MCF 10A (cell line): ENCODE measurements at regions of chr2 and their contacts with region 1.

Region 1: DNA sequence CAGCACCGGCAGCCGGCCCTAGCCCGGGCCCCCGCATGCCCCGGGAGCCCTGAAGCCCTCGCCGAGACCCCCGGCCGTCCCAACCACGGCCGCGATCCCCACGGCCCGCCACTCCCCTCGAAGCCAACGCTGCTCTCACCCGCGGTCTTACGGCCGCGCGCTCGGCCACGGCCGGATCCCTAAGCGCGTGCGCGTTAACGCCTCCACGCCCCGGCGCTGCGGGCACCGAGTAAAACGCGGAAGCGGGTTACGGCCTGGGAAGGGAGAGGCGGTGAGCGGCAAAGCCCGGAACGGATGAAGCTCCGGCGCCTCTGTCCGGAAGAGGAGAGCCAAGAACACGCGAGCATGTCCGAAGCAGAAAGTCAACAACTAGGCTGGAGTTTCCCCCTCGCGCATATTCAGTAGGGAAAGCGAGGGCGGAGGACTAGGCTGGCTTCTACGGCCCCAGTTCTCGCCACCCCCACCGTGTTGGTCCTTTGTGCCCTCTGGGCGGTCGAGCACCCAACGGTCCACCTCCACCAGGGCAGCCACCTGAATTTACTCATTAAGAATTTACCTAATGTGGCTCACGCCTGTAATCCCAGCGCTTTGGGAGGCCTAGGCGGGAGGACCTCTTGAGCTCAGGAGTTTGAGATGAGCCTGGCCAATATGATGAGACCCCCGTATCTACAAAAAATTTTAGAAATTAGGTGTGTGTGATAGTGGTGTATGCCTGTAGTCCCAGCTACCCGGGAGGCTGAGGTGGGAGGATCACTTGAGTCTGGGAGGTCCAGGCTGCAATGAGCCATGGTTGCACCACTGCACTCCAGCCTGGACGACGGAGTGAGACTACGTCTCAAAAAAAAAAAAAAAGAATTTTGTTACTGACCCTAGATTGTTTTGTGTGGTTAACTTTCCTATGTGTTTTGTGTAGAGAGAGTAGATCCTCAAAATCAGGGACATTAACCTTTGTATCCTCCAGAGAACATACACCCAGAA is at the start of gene KANSL3:
- DNase-seq: peak; percentile 92
- H3K4me3 Mint-ChIP-seq: peak within 1 kb of the TSS; percentile 83
- H3K27ac Mint-ChIP-seq: peak within 1 kb of the TSS; percentile 88
- H3K4me1 Mint-ChIP-seq: peaks cover 20% of the 10 kb centered on the region
- H3K27me3 Mint-ChIP-seq: no peaks in the 10 kb centered on the region
- CTCF ChIP-seq: no peak
- total RNA-seq, gene KANSL3: 36.0 and 41.4 TPM in 2 replicates

Region 2: GRCh38 chr2:96374211-96374951 is 264.1 kb before region 1 on chr2:
- CTCF ChIA-PET with region 1: no interaction called
- POLR2A ChIA-PET with region 1: no interaction called
- intact Hi-C with region 1: no loop called
- DNase-seq: peak; percentile 49
- H3K4me3 Mint-ChIP-seq: no peak overlapping the region
- H3K27ac Mint-ChIP-seq: no peak overlapping the region
- H3K4me1 Mint-ChIP-seq: no peaks in the 10 kb centered on the region
- H3K27me3 Mint-ChIP-seq: no peaks in the 10 kb centered on the region
- CTCF ChIP-seq: no peak

Region 3: DNA sequence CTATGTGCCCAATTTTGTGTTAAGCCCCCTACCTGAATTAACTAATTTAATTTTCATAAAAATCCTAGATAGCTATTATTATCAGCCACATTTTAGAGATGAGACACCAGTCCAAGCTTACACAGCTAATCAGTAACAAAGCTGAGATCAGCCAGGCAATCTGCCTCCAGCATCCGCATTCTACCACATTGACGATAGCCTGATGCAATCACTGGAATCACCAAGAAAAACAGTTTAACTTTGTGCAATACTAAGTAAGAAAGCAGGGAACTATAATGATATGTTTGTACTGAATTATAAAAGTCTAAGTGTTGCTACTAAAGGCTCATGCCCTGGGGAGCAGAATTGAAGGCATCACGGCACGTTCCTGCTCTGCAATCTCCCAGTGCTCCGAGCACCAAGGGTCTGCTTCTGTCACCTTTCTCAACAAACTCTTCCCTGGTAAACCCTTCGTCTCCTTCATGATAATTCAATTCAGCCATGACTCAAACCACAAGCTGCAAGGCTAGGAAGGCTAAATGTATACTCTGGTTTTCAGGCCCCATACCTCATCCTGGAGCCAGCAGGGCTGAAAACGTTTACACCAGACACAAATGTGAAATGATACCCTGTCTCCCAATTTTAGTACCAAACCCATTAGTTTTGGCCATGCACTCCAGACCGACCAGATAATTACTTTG is 19.7 kb before region 1 on chr2:
- CTCF ChIA-PET with region 1: interaction called, 3 read pairs
- POLR2A ChIA-PET with region 1: interaction called, 29 read pairs
- intact Hi-C with region 1: no loop called
- DNase-seq: peak; percentile 31
- H3K4me3 Mint-ChIP-seq: no peak overlapping the region
- H3K27ac Mint-ChIP-seq: peak overlapping the region; percentile 92
- H3K4me1 Mint-ChIP-seq: peaks cover 16% of the 10 kb centered on the region
- H3K27me3 Mint-ChIP-seq: no peaks in the 10 kb centered on the region
- CTCF ChIP-seq: no peak

Region 4: GRCh38 chr2:96625571-96626552 is 12.6 kb before region 1 on chr2:
- CTCF ChIA-PET with region 1: interaction called, 3 read pairs
- POLR2A ChIA-PET with region 1: interaction called, 29 read pairs
- intact Hi-C with region 1: no loop called
- DNase-seq: no peak
- H3K4me3 Mint-ChIP-seq: no peak overlapping the region
- H3K27ac Mint-ChIP-seq: no peak overlapping the region
- H3K4me1 Mint-ChIP-seq: peaks cover 6% of the 10 kb centered on the region
- H3K27me3 Mint-ChIP-seq: no peaks in the 10 kb centered on the region
- CTCF ChIP-seq: no peak

Region 5: DNA sequence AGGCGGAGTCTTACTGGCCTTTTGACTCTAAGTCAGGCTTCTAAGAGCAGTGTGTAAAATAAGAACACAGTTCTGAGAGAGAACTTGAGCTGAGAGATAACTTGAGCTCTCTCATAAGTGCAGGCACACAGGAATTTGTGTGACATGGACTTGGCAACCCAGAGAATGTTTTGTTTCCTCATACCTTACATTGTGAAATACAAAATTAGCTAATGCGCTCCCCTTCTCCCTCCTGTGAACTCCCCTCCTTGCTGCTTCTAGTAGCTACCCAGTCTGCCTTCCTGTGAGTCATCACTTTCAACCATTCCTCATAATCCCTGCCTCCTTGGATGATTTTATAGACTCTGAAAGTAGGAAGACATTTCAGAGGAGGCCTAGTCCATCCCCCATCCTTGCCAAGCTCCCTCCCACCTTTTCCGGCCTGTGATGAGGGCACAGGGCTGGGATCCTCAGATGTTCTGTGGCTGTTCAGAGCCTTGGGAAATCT is 26.7 kb after region 1 on chr2:
- CTCF ChIA-PET with region 1: no interaction called
- POLR2A ChIA-PET with region 1: interaction called, 17 read pairs
- intact Hi-C with region 1: no loop called
- DNase-seq: peak; percentile 99
- H3K4me3 Mint-ChIP-seq: peak overlapping the region; percentile 2
- H3K27ac Mint-ChIP-seq: peak overlapping the region; percentile 4
- H3K4me1 Mint-ChIP-seq: no peaks in the 10 kb centered on the region
- H3K27me3 Mint-ChIP-seq: no peaks in the 10 kb centered on the region
- CTCF ChIP-seq: no peak

Region 6: GRCh38 chr2:96698221-96698866 is 59.9 kb after region 1 on chr2:
- CTCF ChIA-PET with region 1: no interaction called
- POLR2A ChIA-PET with region 1: interaction called, 12 read pairs
- intact Hi-C with region 1: no loop called
- DNase-seq: peak; percentile 73
- H3K4me3 Mint-ChIP-seq: no peak overlapping the region
- H3K27ac Mint-ChIP-seq: no peak overlapping the region
- H3K4me1 Mint-ChIP-seq: peaks cover 5% of the 10 kb centered on the region
- H3K27me3 Mint-ChIP-seq: no peaks in the 10 kb centered on the region
- CTCF ChIP-seq: no peak

Region 7: DNA sequence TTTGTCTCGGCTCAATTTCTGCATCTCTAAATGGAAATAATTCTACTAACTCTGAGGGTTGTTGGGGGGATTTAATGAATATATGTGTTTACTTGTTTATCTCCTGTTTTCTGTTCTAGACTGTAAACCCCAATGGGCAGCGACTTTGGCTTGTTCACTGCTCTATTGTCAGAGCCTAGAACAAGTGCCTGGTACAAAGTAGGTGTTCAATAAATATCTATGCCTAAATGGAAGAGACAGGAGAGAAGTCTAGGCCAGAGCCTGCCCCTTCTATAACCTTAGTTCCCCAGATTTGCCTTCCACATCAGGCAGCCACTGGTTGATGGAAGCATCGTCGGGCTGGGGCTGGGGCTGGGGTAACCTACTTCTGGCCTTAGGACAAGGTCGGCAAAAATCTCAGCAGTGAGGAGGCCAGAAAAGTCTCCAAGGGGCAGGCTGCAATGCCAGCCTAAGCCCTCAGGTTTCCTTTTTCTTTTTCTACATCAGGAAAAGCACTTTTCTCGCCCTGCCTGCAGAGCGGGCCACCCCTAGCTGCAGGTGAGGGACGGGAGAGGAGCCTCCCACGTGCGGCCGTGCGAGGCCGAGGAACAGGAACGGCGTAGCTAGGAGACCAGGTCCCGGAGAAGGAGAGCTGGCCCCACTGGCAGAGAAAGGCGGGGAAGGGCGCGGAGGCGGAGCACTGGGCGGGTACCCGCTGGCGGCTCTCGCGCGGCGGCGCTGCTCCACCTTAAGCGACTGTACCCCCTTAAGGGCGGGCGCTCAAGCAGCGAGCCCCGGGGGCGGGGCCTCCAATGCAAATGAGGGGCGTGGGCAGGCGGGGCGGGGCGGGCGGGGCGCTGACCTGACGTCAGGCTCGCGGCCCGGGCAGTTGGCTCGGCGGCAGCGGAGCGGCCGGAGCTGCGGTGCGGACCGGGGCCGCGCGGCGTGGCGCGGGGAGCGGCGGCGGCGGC is 121.9 kb after region 1 on chr2 and contains the start of gene CNNM4:
- CTCF ChIA-PET with region 1: interaction called, 9 read pairs
- POLR2A ChIA-PET with region 1: interaction called, 24 read pairs
- intact Hi-C with region 1: no loop called
- DNase-seq: peak; percentile 93
- H3K4me3 Mint-ChIP-seq: peak within 1 kb of the TSS; percentile 69
- H3K27ac Mint-ChIP-seq: peak within 1 kb of the TSS; percentile 35
- H3K4me1 Mint-ChIP-seq: peaks cover 22% of the 10 kb centered on the region
- H3K27me3 Mint-ChIP-seq: no peaks in the 10 kb centered on the region
- CTCF ChIP-seq: no peak
- total RNA-seq, gene CNNM4: 5.0 and 6.3 TPM in 2 replicates

Region 8: GRCh38 chr2:96788442-96789244 is 150.2 kb after region 1 on chr2:
- CTCF ChIA-PET with region 1: interaction called, 3 read pairs
- POLR2A ChIA-PET with region 1: interaction called, 11 read pairs
- intact Hi-C with region 1: no loop called
- DNase-seq: peak; percentile 54
- H3K4me3 Mint-ChIP-seq: no peak overlapping the region
- H3K27ac Mint-ChIP-seq: peak overlapping the region; percentile 92
- H3K4me1 Mint-ChIP-seq: peaks cover 15% of the 10 kb centered on the region
- H3K27me3 Mint-ChIP-seq: no peaks in the 10 kb centered on the region
- CTCF ChIP-seq: no peak